ENCODE measurements at regions of chr18 and their contacts with region 1.

Region 1: GRCh38 chr18:50819728-50820378 is at the start of gene MRO:
- DNase-seq: peak; percentile 94
- ATAC-seq: peak; percentile 95
- total RNA-seq, gene MRO: 5.3 TPM

Region 2: DNA sequence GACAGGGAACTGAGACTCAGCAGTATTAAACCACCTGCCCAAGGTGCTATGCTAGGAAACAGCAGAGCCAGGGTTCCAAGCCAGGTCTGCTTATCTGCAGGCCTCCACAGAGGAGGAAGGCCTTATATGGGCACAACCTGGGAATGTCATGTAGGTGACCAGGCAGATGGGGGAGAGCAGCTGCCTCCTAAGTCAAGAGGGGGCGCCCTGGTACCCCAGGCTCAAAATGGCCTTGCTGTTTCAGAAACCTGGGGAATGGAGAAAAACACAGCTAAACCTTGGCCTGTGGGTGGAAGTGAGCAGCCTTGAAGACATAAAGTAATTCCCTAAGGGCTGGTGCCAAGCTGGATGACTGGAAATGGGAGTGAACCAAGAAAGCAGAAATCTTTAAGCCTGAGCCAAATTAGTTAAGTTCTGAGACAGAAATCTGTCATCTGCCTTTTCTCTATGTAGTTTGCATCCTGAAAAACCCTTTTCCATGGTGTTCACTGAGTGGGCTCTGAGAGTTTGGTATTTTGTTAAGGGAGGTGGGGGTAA is 180.9 kb before region 1 on chr18:
- intact Hi-C with region 1: no loop called
- DNase-seq: no peak
- ATAC-seq: no peak

Region 3: GRCh38 chr18:50878345-50879301 is 58.8 kb after region 1 on chr18 and contains the start of gene ME2:
- intact Hi-C with region 1: loop called (anchors 5 kb)
- DNase-seq: peak; percentile 95
- ATAC-seq: peak; percentile 98
- total RNA-seq, gene ME2: 92.6 TPM

Region 4: GRCh38 chr18:51051105-51051712 is 231.4 kb after region 1 on chr18:
- intact Hi-C with region 1: loop called (anchors 10 kb)
- DNase-seq: no peak
- ATAC-seq: peak; percentile 79

Measured in Right ventricle myocardium superior (tissue), 1 donor.